ENCODE measurements at regions of chr2 and their contacts with region 1.

Region 1: GRCh38 chr2:101252408-101253012 is at the start of gene CNOT11:
- DNase-seq: peak; percentile 98 to 99 (median 99)
- ATAC-seq: peak; percentile 80
- H3K4me3 ChIP-seq: peak within 1 kb of the TSS; percentile 76 to 84
- H3K4me3 Mint-ChIP-seq: peak within 1 kb of the TSS; percentile 93
- H3K27ac ChIP-seq: peak within 1 kb of the TSS; percentile 93 to 95
- H3K27ac Mint-ChIP-seq: peak within 1 kb of the TSS; percentile 95
- H3K4me1 ChIP-seq: peaks cover 35% of the 10 kb centered on the region
- H3K4me1 Mint-ChIP-seq: peaks cover 47% of the 10 kb centered on the region
- H3K27me3 ChIP-seq: no peaks in the 10 kb centered on the region
- H3K27me3 Mint-ChIP-seq: no peaks in the 10 kb centered on the region
- CTCF ChIP-seq: no peak
- total RNA-seq, gene CNOT11: 41.9 to 43.0 TPM

Region 2: DNA sequence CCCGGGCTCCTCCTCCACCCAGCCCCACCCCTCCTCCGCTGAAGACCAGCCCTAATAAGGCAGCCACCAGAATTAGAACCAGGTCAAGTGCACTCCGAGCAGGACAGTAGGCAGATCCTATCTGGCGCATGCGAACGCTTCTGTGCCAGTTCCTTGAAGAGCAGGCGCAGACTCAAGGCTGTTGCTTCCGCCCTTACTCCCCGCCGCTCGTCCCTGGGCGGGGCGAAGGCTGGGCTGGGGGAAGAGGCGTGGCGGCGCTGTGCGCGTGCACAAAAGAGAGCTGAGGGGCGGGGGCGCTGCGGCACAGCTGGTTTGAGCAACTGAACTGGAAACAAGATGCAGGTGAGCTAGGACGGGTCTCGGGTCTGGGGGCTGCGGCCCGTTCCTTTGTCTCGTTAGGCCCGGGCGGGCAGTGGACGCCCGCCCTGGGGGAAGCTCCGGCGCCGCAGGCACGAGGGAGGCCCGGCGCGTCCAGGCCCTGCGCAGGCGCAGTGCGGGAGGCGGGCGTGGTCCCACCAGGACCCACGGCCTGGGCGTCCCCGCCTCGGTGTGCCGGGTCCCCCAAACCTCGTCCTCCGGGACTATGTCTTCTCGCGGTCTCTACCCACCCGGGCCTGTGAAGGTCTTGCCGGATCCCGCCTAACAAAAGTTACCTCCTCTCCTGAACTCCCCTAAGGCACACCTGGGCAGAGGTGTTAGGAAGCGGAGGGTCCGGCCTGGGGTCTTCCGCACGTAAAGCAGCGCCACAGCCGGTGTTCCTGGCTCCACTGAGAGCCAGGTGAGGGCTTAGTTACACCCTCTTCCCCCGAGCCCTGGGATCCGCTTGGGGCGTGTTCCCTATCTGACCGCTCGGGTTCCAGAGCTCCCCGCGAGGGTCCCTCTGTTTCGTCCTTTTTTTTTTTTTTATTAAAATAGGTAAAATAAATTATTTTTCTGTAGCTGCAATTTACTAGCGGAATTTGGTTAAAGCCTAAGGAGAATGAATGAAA is 689.5 kb before region 1 on chr2 and contains the start of gene PDCL3:
- CTCF ChIA-PET with region 1: no interaction called
- POLR2A ChIA-PET with region 1: interaction called, 3 read pairs
- intact Hi-C with region 1: loop called (anchors 2 to 5 kb)
- DNase-seq: peak; percentile 88 to 98 (median 94)
- ATAC-seq: peak; percentile 88
- H3K4me3 ChIP-seq: peak within 1 kb of the TSS; percentile 69 to 89
- H3K4me3 Mint-ChIP-seq: peak within 1 kb of the TSS; percentile 97
- H3K27ac ChIP-seq: peak within 1 kb of the TSS; percentile 84 to 87
- H3K27ac Mint-ChIP-seq: peak within 1 kb of the TSS; percentile 99
- H3K4me1 ChIP-seq: peaks cover 18% of the 10 kb centered on the region
- H3K4me1 Mint-ChIP-seq: peaks cover 39% of the 10 kb centered on the region
- H3K27me3 ChIP-seq: no peaks in the 10 kb centered on the region
- H3K27me3 Mint-ChIP-seq: no peaks in the 10 kb centered on the region
- CTCF ChIP-seq: no peak
- total RNA-seq, gene PDCL3: 32.4 to 33.5 TPM

Region 3: DNA sequence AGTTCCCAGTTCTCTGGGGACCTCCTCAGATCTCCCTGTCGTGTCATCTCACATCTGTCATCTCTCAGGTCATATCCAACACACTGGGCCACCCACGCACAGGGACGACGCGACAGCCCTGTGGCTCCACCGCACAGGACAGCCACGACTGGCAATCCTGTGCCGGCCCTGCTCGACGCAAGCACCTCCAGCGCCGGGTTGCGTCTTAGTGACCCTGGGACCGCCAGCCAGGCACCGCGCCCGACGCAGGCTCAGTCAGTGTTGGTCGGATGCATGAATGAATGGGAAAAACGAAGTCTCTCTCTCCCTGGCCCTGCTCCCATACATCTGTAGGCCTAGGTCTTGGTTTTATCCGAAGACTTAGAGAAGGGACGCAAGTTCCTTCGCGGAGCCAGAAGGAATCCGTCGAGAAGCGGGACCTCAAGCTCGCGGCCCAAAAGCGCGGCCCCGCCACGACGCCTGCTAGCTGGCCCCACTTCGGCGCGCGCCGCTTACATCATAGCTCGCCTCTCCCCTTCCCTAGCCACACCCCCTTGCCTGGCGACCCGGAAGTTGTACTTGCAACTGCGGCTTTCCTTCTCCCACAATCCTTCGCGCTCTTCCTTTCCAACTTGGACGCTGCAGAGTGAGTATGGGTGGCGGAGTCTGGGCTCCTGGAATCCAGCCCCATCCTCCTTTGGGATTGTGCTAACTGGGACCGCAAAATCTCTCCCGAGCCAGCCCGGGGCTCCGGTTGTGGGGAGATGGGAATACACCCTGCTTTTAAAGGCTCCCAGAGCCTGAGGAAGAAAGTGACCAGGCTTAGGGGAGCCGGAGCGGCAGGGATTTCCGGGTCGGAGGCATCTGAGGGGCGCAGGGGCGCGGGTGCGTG is 250.6 kb before region 1 on chr2 and contains the start of gene RPL31:
- CTCF ChIA-PET with region 1: no interaction called
- POLR2A ChIA-PET with region 1: interaction called, 5 read pairs
- intact Hi-C with region 1: loop called in 1 of 2 experiments (anchors 2 kb)
- DNase-seq: peak; percentile 90 to 98 (median 95)
- ATAC-seq: peak; percentile 97
- H3K4me3 ChIP-seq: peak within 1 kb of the TSS; percentile 92 to 95
- H3K4me3 Mint-ChIP-seq: peak within 1 kb of the TSS; percentile 95
- H3K27ac ChIP-seq: peak within 1 kb of the TSS; percentile 81 to 90
- H3K27ac Mint-ChIP-seq: peak within 1 kb of the TSS; percentile 98
- H3K4me1 ChIP-seq: peaks cover 27% of the 10 kb centered on the region
- H3K4me1 Mint-ChIP-seq: peaks cover 51% of the 10 kb centered on the region
- H3K27me3 ChIP-seq: no peaks in the 10 kb centered on the region
- H3K27me3 Mint-ChIP-seq: no peaks in the 10 kb centered on the region
- CTCF ChIP-seq: no peak
- total RNA-seq, gene RPL31: 2,776 to 2,895 TPM

Region 4: GRCh38 chr2:101151141-101151858 is 101.2 kb before region 1 on chr2 and contains the start of gene TBC1D8:
- CTCF ChIA-PET with region 1: no interaction called
- POLR2A ChIA-PET with region 1: no interaction called
- intact Hi-C with region 1: loop called (anchors 1 to 2 kb)
- DNase-seq: peak in 8 of 9 experiments; percentile 45 to 78 (median 56)
- ATAC-seq: peak; percentile 83
- H3K4me3 ChIP-seq: peak within 1 kb of the TSS; percentile 38 to 56
- H3K4me3 Mint-ChIP-seq: peak within 1 kb of the TSS; percentile 87
- H3K27ac ChIP-seq: peak within 1 kb of the TSS in 1 of 2 experiments; percentile 40
- H3K27ac Mint-ChIP-seq: no peak within 1 kb of the TSS
- H3K4me1 ChIP-seq: peaks cover 25% of the 10 kb centered on the region
- H3K4me1 Mint-ChIP-seq: peaks cover 25% of the 10 kb centered on the region
- H3K27me3 ChIP-seq: peaks cover 0 to 6% of the 10 kb centered on the region in 2 experiments
- H3K27me3 Mint-ChIP-seq: peaks cover 8% of the 10 kb centered on the region
- CTCF ChIP-seq: no peak
- total RNA-seq, gene TBC1D8: 0.47 to 1.1 TPM

Region 5: DNA sequence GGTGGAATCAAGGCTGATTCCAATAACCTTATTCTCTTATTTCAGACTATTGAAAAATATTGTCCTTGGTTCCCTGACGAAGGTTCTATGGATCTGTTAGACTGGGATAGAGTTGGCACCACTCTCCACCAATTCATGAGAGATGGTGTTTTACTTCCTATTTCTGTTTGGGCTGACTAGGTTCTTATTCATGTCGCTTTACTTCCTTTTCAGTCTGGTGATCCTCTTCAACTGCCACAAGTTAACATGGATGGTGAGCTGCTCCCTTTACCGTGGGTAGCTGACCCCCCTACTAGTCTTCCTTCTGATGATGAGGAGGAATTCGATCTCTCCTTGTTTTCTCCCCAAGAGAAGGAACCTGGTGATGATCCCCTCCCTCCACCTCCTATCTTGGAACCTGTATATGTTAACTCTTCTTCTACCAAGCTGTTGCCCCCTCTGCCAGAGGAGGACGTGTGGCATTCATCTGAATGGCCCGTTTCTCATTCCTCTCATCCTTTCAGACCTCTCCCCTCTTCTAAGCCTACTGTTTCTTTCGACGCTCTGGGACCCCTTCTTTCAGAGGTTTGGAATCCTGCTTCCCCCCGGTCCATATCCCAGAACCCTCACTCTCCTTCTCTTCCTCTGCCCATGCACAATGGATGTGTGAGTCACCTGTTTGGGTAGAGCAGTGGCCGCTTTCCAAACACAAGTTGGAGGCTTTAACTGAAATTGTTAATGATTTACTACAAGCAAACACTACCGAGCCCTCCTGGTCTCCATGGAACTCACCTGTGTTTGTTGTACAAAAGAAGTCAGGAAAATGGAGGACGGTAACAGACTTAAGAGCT is 13.4 kb before region 1 on chr2:
- CTCF ChIA-PET with region 1: interaction called, 5 read pairs
- POLR2A ChIA-PET with region 1: no interaction called
- intact Hi-C with region 1: loop called in 1 of 2 experiments (anchors 1 kb)
- DNase-seq: no peak
- ATAC-seq: no peak
- H3K4me3 ChIP-seq: no peak overlapping the region
- H3K4me3 Mint-ChIP-seq: no peak overlapping the region
- H3K27ac ChIP-seq: no peak overlapping the region
- H3K27ac Mint-ChIP-seq: no peak overlapping the region
- H3K4me1 ChIP-seq: no peaks in the 10 kb centered on the region
- H3K4me1 Mint-ChIP-seq: no peaks in the 10 kb centered on the region
- H3K27me3 ChIP-seq: no peaks in the 10 kb centered on the region
- H3K27me3 Mint-ChIP-seq: no peaks in the 10 kb centered on the region
- CTCF ChIP-seq: no peak

Region 6: GRCh38 chr2:101308432-101309210 is 56.1 kb after region 1 on chr2 and contains the start of gene RNF149:
- CTCF ChIA-PET with region 1: interaction called, 3 read pairs
- POLR2A ChIA-PET with region 1: interaction called, 13 read pairs
- intact Hi-C with region 1: loop called (anchors 1 kb)
- DNase-seq: peak; percentile 80 to 97 (median 93)
- ATAC-seq: peak; percentile 64
- H3K4me3 ChIP-seq: peak within 1 kb of the TSS; percentile 75 to 88
- H3K4me3 Mint-ChIP-seq: peak within 1 kb of the TSS; percentile 92
- H3K27ac ChIP-seq: peak within 1 kb of the TSS; percentile 81 to 90
- H3K27ac Mint-ChIP-seq: peak within 1 kb of the TSS; percentile 99
- H3K4me1 ChIP-seq: peaks cover 72% of the 10 kb centered on the region
- H3K4me1 Mint-ChIP-seq: peaks cover 78% of the 10 kb centered on the region
- H3K27me3 ChIP-seq: no peaks in the 10 kb centered on the region
- H3K27me3 Mint-ChIP-seq: no peaks in the 10 kb centered on the region
- CTCF ChIP-seq: no peak
- total RNA-seq, gene RNF149: 128 to 129 TPM

Region 7: GRCh38 chr2:101697124-101698013 is 444.9 kb after region 1 on chr2 and contains the start of gene MAP4K4:
- CTCF ChIA-PET with region 1: no interaction called
- POLR2A ChIA-PET with region 1: no interaction called
- intact Hi-C with region 1: loop called in 1 of 2 experiments (anchors 5 kb)
- DNase-seq: peak; percentile 53 to 88 (median 78)
- ATAC-seq: peak; percentile 63
- H3K4me3 ChIP-seq: peak within 1 kb of the TSS; percentile 71 to 81
- H3K4me3 Mint-ChIP-seq: peak within 1 kb of the TSS; percentile 94
- H3K27ac ChIP-seq: peak within 1 kb of the TSS; percentile 56 to 65
- H3K27ac Mint-ChIP-seq: peak within 1 kb of the TSS; percentile 96
- H3K4me1 ChIP-seq: peaks cover 34% of the 10 kb centered on the region
- H3K4me1 Mint-ChIP-seq: peaks cover 28% of the 10 kb centered on the region
- H3K27me3 ChIP-seq: no peaks in the 10 kb centered on the region
- H3K27me3 Mint-ChIP-seq: no peaks in the 10 kb centered on the region
- CTCF ChIP-seq: no peak
- total RNA-seq, gene MAP4K4: 72.4 TPM